ENCODE measurements at regions of chr4 and their contacts with region 1.

Region 1: GRCh38 chr4:2008875-2009703 is at the start of gene NELFA:
- DNase-seq: peak; percentile 85 to 97 (median 88)
- ATAC-seq: peak; percentile 86
- H3K4me3 ChIP-seq: peak within 1 kb of the TSS; percentile 89
- H3K27ac ChIP-seq: peak within 1 kb of the TSS; percentile 98
- H3K4me1 ChIP-seq: peaks cover 15 to 35% of the 10 kb centered on the region in 2 experiments; a peak in 4 of 5 replicates
- H3K27me3 ChIP-seq: no peaks in the 10 kb centered on the region
- CTCF ChIP-seq: peak in 2 of 3 experiments; percentile 10 to 22; a peak in 2 of 6 replicates
- EP300 ChIP-seq: no peak
- POLR2A ChIP-seq: peak; percentile 89
- RAD21 ChIP-seq: peak in 1 of 2 experiments; percentile 26; a peak in 2 of 4 replicates
- polyA plus RNA-seq, gene NELFA: 0.76 to 1.4 TPM

Region 2: GRCh38 chr4:1994935-1995334 is 14.2 kb before region 1 on chr4:
- CTCF ChIA-PET with region 1: no interaction called
- POLR2A ChIA-PET with region 1: interaction called, 10 read pairs
- in situ Hi-C with region 1: no loop called
- intact Hi-C with region 1: no loop called
- DNase-seq: no peak
- ATAC-seq: no peak; the same call in 2 of the 3 replicates
- H3K4me3 ChIP-seq: no peak overlapping the region
- H3K27ac ChIP-seq: no peak overlapping the region
- H3K4me1 ChIP-seq: peaks cover 0 to 18% of the 10 kb centered on the region in 2 experiments; a peak in 3 of 5 replicates
- H3K27me3 ChIP-seq: no peaks in the 10 kb centered on the region
- CTCF ChIP-seq: no peak
- EP300 ChIP-seq: no peak
- POLR2A ChIP-seq: no peak
- RAD21 ChIP-seq: no peak

Region 3: DNA sequence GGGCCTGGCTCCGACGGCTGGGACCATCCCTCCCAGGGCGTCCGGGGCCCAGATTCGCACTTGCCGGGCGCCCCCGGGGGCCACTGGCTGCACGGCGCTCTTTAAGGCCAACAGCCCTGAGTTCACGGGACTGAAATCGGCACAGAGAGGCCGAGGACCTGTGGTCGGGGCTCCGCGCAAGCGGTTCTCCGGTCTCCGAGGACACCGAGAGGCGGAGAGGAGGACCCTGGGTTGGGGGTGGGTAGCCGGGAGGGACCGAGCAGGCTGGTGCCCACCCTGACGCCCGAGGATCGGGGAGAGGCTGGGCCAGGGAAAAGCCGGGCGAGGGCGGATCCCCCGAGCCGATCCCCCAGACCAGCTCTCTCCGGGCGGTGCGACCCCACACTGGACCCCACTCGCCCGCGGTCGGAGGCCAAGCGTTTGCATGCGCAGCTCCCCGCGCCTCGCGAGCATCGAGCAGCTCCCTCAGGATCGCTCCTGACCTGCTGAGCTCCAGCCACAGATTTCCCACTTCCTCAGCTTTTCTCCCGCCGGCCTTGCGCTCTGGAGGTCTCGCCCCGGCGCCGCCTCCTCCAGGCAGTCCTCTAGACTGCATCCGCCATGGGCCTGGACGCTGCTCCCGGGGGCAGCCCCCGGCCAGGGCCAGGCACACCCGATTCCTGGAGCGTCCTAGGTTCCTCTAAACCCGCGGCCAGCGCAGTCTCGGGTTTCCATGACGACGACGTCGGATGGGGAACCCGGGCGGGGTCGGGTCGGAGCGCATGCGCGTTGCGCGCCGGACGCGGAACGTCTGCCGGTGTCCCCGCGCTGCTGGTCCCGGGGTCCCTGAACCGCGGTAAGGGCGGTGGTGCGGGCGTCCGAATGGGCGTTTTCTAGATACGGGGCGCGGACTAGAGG is 32.4 kb after region 1 on chr4:
- CTCF ChIA-PET with region 1: interaction called, 4 read pairs
- POLR2A ChIA-PET with region 1: interaction called, 4 read pairs
- in situ Hi-C with region 1: no loop called
- intact Hi-C with region 1: loop called (anchors 5 kb)
- DNase-seq: peak; percentile 92 to 95 (median 94)
- ATAC-seq: peak; percentile 89
- H3K4me3 ChIP-seq: peak overlapping the region; percentile 68
- H3K27ac ChIP-seq: peak overlapping the region; percentile 58; the same call in 1 of the 3 replicates
- H3K4me1 ChIP-seq: peaks cover 3 to 46% of the 10 kb centered on the region in 2 experiments; a peak in 2 of 5 replicates
- H3K27me3 ChIP-seq: no peaks in the 10 kb centered on the region
- CTCF ChIP-seq: no peak
- EP300 ChIP-seq: no peak
- POLR2A ChIP-seq: peak; percentile 56; the same call in 1 of the 2 replicates
- RAD21 ChIP-seq: no peak